ENCODE measurements at regions of chr1 and their contacts with region 1.

Region 1: DNA sequence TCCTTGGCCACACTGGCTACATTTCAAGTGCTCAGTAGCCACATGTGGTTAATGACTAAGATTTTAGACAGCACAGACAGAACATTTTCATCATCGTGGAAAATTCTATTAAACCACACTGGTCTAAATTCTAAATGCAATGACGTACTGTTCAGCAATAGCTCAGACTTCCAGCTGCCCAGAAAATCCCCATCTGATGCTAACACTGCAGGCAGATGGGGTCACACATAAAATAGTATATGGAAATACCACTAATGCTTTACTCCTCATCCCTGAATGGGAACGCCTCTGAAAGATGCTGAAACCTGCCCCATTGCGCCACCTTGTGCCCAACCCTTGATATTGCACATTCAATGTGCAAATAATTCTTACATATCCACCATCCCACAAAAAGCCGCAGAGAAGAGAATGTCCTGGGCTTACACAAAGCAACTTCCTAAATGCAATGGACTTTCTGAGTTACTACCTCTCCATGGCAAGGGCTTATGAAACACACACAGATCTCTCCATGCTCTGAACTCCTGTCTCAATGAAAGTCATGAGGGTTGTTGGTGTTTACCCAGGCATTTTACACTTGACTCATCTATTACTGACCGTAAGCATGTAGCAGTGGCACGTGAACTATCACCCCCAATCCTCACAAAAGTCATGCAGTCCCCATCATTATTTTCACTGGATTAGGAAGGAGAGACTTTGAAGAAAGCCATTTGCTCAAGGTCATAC is 20.3 kb upstream of the SLC5A9 start:
- DNase-seq: peak in 1 of 2 experiments; percentile 45
- H3K4me3 ChIP-seq: no peak overlapping the region
- H3K27ac ChIP-seq: no peak overlapping the region
- H3K4me1 ChIP-seq: no peaks in the 10 kb centered on the region
- H3K27me3 ChIP-seq: no peaks in the 10 kb centered on the region
- CTCF ChIP-seq: peak; percentile 87

Region 2: DNA sequence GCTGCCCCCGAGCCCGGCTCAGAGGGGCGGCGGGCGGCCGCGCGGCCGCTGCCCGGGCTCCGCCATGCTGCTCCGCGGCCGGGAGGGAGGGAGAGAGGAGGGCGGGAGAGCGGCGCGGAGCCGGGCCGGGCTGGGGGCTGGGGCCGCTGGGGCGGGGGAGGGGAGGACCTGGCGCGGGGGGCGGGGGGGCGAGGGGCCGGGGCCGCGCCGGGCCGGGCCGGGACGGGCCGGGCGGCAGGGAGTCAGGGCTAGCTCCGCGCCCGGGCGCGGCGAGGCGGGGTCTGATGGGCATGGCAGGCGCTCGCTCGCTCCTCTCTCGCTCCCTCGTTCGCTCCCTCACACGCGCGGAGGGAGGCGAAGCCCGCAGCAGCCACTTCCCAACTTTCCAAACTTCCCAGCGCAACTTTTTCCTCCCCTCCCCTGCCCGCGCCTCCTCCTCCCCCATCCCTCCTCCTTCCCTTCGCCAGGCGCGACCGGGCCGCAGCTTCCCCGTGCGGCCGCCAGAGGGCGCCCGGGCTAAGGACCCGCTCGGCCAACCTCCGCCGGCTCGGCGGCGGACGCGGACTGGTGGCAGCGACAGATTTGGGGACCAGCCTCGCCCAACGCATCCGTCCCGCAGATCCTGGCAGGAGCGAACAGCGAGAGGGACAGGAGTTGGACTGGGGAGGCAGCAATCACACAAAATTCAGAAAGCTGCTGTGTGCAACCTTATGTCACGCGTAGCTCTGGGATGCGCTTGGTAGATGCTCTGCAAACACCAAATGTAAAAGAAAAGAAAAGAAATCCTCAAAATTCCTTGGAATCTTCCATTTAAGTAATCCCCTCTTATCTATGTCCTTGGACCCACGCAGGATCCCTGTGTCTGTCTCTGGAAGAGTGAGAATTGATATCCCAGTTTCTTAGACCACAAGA is 204.6 kb before region 1 on chr1 and contains the start of gene TRABD2B:
- CTCF ChIA-PET with region 1: no interaction called
- POLR2A ChIA-PET with region 1: no interaction called
- intact Hi-C with region 1: loop called (anchors 1 kb)
- DNase-seq: peak in 1 of 2 experiments; percentile 69
- H3K4me3 ChIP-seq: peak within 1 kb of the TSS; percentile 42; the same call in 1 of the 2 replicates
- H3K27ac ChIP-seq: no peak within 1 kb of the TSS
- H3K4me1 ChIP-seq: no peaks in the 10 kb centered on the region
- H3K27me3 ChIP-seq: peaks cover 12% of the 10 kb centered on the region; the same call in 1 of the 2 replicates
- CTCF ChIP-seq: peak; percentile 94
- total RNA-seq, gene TRABD2B: not detected in 2 replicates

Region 3: GRCh38 chr1:48093696-48094528 is 108.3 kb before region 1 on chr1:
- CTCF ChIA-PET with region 1: interaction called, 3 read pairs
- POLR2A ChIA-PET with region 1: no interaction called
- intact Hi-C with region 1: loop called (anchors 1 kb)
- DNase-seq: peak; percentile 65 to 76
- H3K4me3 ChIP-seq: no peak overlapping the region
- H3K27ac ChIP-seq: no peak overlapping the region
- H3K4me1 ChIP-seq: no peaks in the 10 kb centered on the region
- H3K27me3 ChIP-seq: peaks cover 18% of the 10 kb centered on the region
- CTCF ChIP-seq: peak; percentile 88

Region 4: GRCh38 chr1:48109390-48110013 is 92.7 kb before region 1 on chr1:
- CTCF ChIA-PET with region 1: no interaction called
- POLR2A ChIA-PET with region 1: no interaction called
- intact Hi-C with region 1: loop called (anchors 1 kb)
- DNase-seq: peak in 1 of 2 experiments; percentile 10
- H3K4me3 ChIP-seq: no peak overlapping the region
- H3K27ac ChIP-seq: no peak overlapping the region
- H3K4me1 ChIP-seq: no peaks in the 10 kb centered on the region
- H3K27me3 ChIP-seq: no peaks in the 10 kb centered on the region
- CTCF ChIP-seq: peak; percentile 73

Measured in PC-9 (cell line).